GM10248 (cell line): ENCODE measurements at regions of chr3 and their contacts with region 1.

Region 1: DNA sequence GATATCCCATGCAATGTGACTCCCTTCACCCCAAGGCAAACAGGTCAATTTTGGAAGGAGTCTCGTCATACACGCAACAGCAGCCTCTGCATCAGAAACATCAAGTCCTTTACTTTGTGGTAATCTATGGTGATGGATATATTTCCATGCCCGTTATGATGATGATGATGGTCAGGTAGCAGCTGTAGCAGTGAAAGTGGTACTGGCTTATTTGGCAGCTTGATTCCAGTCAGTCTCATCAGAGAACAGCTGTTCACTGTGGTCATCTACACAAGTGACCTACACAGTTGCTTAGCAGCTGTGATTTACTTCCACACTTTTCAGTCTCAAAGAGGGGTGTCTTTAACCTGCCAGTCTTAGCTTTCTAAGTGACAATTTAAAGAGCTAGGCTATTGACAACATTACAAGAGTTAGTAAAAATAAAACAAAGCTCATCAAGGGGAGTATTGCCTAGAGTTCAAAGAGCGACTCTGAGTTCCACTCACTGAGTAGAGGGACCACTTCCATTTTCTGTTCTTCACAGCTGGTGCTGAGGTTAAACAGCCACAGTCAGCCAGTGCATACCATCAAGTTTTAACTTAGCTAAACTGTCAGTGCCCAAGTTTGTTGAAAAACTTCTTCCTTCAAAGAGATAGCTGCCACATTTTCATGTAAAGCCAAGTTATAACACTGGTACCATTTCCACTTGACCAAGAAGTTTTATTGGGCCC is 587.4 kb upstream of the KCNMB2 start:
- DNase-seq: no peak
- CTCF ChIP-seq: no peak

Region 2: GRCh38 chr3:177257006-177257405 is 691.9 kb before region 1 on chr3:
- CTCF ChIA-PET with region 1: no interaction called
- POLR2A ChIA-PET with region 1: no interaction called
- DNase-seq: no peak
- CTCF ChIP-seq: no peak

Region 3: DNA sequence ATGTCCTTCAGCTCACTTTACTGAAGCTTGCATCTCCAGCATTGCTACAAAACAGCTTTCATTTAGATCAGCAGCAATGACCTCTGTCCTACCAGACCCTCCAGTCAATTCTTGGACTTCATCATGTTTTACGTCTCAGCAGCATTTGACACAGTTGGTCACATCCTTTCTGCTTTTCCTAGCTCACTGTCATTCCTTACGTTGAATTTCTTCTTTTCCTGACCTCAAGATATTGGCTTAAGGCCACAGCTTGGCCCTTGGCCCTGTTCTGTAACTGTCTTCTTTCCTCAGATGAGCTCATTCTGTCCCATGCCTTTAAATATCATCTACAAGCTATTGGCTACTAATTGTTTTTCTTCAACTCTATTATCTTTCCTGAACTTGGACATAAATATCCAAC is 11.1 kb after region 1 on chr3:
- CTCF ChIA-PET with region 1: interaction called, 15 read pairs
- POLR2A ChIA-PET with region 1: no interaction called
- DNase-seq: no peak
- CTCF ChIP-seq: no peak